ENCODE measurements at regions of chr9 and their contacts with region 1.

Region 1: DNA sequence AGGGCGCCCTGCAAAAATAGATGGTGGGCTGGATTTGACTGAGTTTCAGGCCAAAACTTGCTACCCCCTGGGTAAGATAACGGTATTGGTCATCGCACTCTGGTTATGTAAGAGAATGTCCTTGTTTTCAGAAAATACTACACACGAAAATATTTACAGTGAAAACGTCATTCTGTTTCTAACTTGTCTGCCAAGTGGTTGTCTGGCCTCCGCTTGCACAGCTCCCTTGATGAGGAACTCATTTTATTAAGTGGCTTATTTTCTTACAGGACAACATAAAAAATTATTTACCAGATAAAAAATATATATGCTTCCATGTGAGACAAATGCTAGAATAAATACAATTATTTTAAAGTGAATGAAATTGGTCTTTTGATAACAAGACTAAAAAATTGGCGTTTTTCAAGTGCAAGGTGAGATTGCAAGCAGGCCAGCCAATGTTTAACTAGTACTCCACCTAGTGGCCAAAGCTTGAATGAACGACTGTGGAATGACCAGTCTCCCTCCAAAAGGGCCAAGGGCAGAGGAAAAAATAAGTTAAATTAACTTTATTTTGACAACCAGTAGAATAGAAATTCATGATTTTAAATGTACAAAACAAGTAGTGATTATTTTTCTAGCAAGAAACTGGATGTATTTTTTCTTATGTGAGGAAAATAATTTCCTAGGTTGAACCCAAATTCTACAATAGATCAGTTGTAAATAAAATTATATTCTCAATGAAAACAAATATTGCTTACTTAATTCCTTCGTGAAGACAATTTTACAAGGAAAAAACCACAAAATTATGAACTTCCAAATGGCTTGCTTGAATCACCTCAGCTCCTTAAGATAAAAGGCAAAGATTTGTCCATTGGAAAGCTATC is 93.2 kb downstream of the ZFAND5 start:
- DNase-seq: no peak
- H3K4me3 ChIP-seq: no peak overlapping the region
- H3K27ac ChIP-seq: no peak overlapping the region
- H3K4me1 ChIP-seq: no peaks in the 10 kb centered on the region
- H3K27me3 ChIP-seq: peaks cover 12% of the 10 kb centered on the region
- CTCF ChIP-seq: peak; percentile 91

Region 2: DNA sequence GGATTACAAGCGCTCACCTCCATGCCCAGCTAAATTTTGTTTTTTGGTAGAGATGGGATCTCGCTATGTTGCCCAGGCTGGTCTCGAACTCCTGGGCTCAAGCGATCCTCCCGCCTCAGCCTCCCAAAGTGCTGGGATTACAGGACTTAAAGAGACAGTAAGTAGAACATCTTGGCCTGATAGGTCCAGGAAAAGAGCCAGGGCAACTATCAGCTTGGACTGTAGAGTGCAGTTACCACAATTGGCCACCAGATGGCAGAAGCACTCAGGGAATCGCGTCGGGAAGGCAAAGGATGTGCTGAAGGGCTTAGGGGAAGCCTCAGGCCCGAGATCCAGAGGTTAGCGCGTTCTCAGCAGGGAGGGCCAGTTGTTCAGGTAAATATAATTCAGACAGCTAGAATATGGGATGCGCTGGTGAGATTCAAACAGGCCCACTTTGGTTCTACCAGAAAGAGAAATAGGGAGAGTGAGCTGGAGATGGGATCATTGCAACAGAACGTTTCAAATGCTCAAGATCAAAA is 232.9 kb before region 1 on chr9:
- intact Hi-C with region 1: loop called (anchors 5 kb)
- DNase-seq: peak; percentile 70
- H3K4me3 ChIP-seq: no peak overlapping the region
- H3K27ac ChIP-seq: peak overlapping the region; percentile 31
- H3K4me1 ChIP-seq: peaks cover 14% of the 10 kb centered on the region
- H3K27me3 ChIP-seq: no peaks in the 10 kb centered on the region
- CTCF ChIP-seq: peak; percentile 95